Lower leg skin (tissue), 4 donors: ENCODE measurements at regions of chr9 and their contacts with region 1.

Region 1: GRCh38 chr9:85142968-85143367 is 473.4 kb downstream of the NTRK2 start:
- DNase-seq: no peak
- H3K4me3 ChIP-seq: no peak overlapping the region
- CTCF ChIP-seq: no peak
- POLR2A ChIP-seq: no peak

Region 2: GRCh38 chr9:84932915-84933527 is 209.9 kb before region 1 on chr9:
- intact Hi-C with region 1: loop called (anchors 10 kb)
- DNase-seq: no peak
- H3K4me3 ChIP-seq: no peak overlapping the region
- CTCF ChIP-seq: no peak
- POLR2A ChIP-seq: no peak